ENCODE measurements at regions of chr6 and their contacts with region 1.

Region 1: GRCh38 chr6:31128093-31128676 is 7.9 kb upstream of the CDSN start:
- DNase-seq: peak; percentile 72
- H3K4me3 Mint-ChIP-seq: no peak overlapping the region
- H3K27ac Mint-ChIP-seq: peak overlapping the region; percentile 82
- H3K4me1 Mint-ChIP-seq: peaks cover 38% of the 10 kb centered on the region
- H3K27me3 Mint-ChIP-seq: no peaks in the 10 kb centered on the region
- CTCF ChIP-seq: peak; percentile 88

Region 2: GRCh38 chr6:31079656-31080261 is 48.4 kb before region 1 on chr6:
- CTCF ChIA-PET with region 1: interaction called, 10 read pairs
- POLR2A ChIA-PET with region 1: interaction called, 3 read pairs
- intact Hi-C with region 1: no loop called
- DNase-seq: peak; percentile 69
- H3K4me3 Mint-ChIP-seq: no peak overlapping the region
- H3K27ac Mint-ChIP-seq: no peak overlapping the region
- H3K4me1 Mint-ChIP-seq: peaks cover 16% of the 10 kb centered on the region
- H3K27me3 Mint-ChIP-seq: no peaks in the 10 kb centered on the region
- CTCF ChIP-seq: peak; percentile 62

Region 3: DNA sequence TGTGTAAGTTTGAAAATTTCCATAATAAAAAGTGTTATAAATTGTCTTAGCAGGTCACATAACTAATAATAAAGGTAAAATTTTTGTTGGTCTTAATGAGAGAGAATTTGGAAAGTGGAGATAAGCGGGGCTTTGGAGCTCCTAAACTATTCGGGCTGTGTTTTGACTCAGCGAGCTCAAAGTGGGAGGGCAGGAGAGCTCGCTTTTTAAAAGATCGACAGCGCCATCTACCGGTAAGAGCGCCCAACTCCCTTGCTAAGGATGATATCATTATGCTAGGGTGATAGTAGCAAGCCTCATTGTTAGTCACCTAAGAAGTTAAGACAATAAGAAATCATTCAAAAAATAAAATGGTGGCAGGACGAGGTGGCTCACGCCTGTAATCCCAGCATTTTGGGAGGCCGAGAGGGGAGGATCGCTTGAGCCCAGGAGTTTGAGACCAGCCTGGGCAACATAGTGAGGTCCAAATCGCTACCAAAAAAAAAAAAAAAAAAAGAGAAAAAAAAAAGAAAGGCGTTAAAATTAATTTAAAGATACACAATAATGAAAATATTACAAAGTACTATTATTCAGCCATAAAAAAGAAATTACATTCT is 40.6 kb before region 1 on chr6:
- CTCF ChIA-PET with region 1: interaction called, 43 read pairs
- POLR2A ChIA-PET with region 1: interaction called, 3 read pairs
- intact Hi-C with region 1: loop called (anchors 5 kb)
- DNase-seq: peak; percentile 91
- H3K4me3 Mint-ChIP-seq: no peak overlapping the region
- H3K27ac Mint-ChIP-seq: peak overlapping the region; percentile 16
- H3K4me1 Mint-ChIP-seq: peaks cover 21% of the 10 kb centered on the region
- H3K27me3 Mint-ChIP-seq: no peaks in the 10 kb centered on the region
- CTCF ChIP-seq: peak; percentile 65

Region 4: GRCh38 chr6:31114970-31115849 is 13.0 kb before region 1 on chr6:
- CTCF ChIA-PET with region 1: interaction called, 16 read pairs
- POLR2A ChIA-PET with region 1: interaction called, 60 read pairs
- intact Hi-C with region 1: loop called (anchors 1 kb)
- DNase-seq: peak; percentile 81
- H3K4me3 Mint-ChIP-seq: peak overlapping the region; percentile 79
- H3K27ac Mint-ChIP-seq: peak overlapping the region; percentile 98
- H3K4me1 Mint-ChIP-seq: peaks cover 21% of the 10 kb centered on the region
- H3K27me3 Mint-ChIP-seq: no peaks in the 10 kb centered on the region
- CTCF ChIP-seq: peak; percentile 33

Region 5: GRCh38 chr6:31139599-31139998 is 11.4 kb after region 1 on chr6:
- CTCF ChIA-PET with region 1: interaction called, 15 read pairs
- POLR2A ChIA-PET with region 1: interaction called, 3 read pairs
- intact Hi-C with region 1: no loop called
- DNase-seq: no peak
- H3K4me3 Mint-ChIP-seq: no peak overlapping the region
- H3K27ac Mint-ChIP-seq: no peak overlapping the region
- H3K4me1 Mint-ChIP-seq: peaks cover 15% of the 10 kb centered on the region
- H3K27me3 Mint-ChIP-seq: no peaks in the 10 kb centered on the region
- CTCF ChIP-seq: no peak

Region 6: GRCh38 chr6:31197559-31198305 is 69.5 kb after region 1 on chr6:
- CTCF ChIA-PET with region 1: interaction called, 13 read pairs
- POLR2A ChIA-PET with region 1: interaction called, 7 read pairs
- intact Hi-C with region 1: no loop called
- DNase-seq: peak; percentile 91
- H3K4me3 Mint-ChIP-seq: peak overlapping the region; percentile 86
- H3K27ac Mint-ChIP-seq: peak overlapping the region; percentile 95
- H3K4me1 Mint-ChIP-seq: peaks cover 10% of the 10 kb centered on the region
- H3K27me3 Mint-ChIP-seq: no peaks in the 10 kb centered on the region
- CTCF ChIP-seq: no peak

Region 7: GRCh38 chr6:31366693-31367470 is 238.7 kb after region 1 on chr6:
- CTCF ChIA-PET with region 1: interaction called, 12 read pairs
- POLR2A ChIA-PET with region 1: interaction called, 3 read pairs
- intact Hi-C with region 1: no loop called
- DNase-seq: peak; percentile 90
- H3K4me3 Mint-ChIP-seq: peak overlapping the region; percentile 36
- H3K27ac Mint-ChIP-seq: no peak overlapping the region
- H3K4me1 Mint-ChIP-seq: no peaks in the 10 kb centered on the region
- H3K27me3 Mint-ChIP-seq: peaks cover 93% of the 10 kb centered on the region
- CTCF ChIP-seq: peak; percentile 80